ENCODE measurements at regions of chr19 and their contacts with region 1.

Region 1: DNA sequence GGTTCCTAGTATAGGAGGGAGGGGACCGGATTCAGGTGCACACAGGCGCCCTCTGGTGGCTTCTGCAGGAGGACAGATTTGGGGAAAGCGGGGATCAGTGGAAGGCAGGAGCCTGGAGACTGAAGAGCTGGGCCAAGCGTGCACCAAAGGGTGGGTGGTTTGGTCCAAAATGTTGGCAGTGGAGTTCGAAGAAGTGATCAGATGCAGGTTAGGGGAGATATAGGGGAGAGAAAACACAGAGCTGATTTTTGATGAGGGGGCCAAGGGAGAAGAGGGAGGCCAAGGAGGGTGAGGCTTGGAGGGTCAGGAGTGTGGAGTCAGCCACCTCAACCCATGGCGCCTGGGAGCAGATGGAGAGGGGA is 6.8 kb upstream of the CARM1 start:
- DNase-seq: peak; percentile 91
- H3K4me3 ChIP-seq: peak overlapping the region in 1 of 2 experiments; percentile 36; a peak in 1 of 4 replicates
- H3K27ac ChIP-seq: no peak overlapping the region
- H3K4me1 ChIP-seq: no peaks in the 10 kb centered on the region; a peak in 1 of 4 replicates
- H3K27me3 ChIP-seq: no peaks in the 10 kb centered on the region
- CTCF ChIP-seq: peak; percentile 95
- EP300 ChIP-seq: no peak
- RAD21 ChIP-seq: peak; percentile 72

Region 2: GRCh38 chr19:10717356-10718204 is 146.9 kb before region 1 on chr19 and contains the start of gene DNM2:
- CTCF ChIA-PET with region 1: interaction called, 74 read pairs
- POLR2A ChIA-PET with region 1: no interaction called
- DNase-seq: peak; percentile 96
- H3K4me3 ChIP-seq: peak within 1 kb of the TSS; percentile 74 to 98
- H3K27ac ChIP-seq: peak within 1 kb of the TSS; percentile 80 to 93
- H3K4me1 ChIP-seq: peaks cover 4 to 13% of the 10 kb centered on the region in 2 experiments; a peak in 1 of 4 replicates
- H3K27me3 ChIP-seq: no peaks in the 10 kb centered on the region
- CTCF ChIP-seq: peak; percentile 86
- EP300 ChIP-seq: no peak
- RAD21 ChIP-seq: peak; percentile 90
- polyA plus RNA-seq, gene DNM2: 52.5 and 53.6 TPM in 2 replicates

Region 3: GRCh38 chr19:10760273-10760944 is 104.1 kb before region 1 on chr19:
- CTCF ChIA-PET with region 1: interaction called, 74 read pairs
- POLR2A ChIA-PET with region 1: no interaction called
- DNase-seq: no peak
- H3K4me3 ChIP-seq: no peak overlapping the region
- H3K27ac ChIP-seq: no peak overlapping the region
- H3K4me1 ChIP-seq: peaks cover 0 to 20% of the 10 kb centered on the region in 2 experiments; a peak in 1 of 4 replicates
- H3K27me3 ChIP-seq: no peaks in the 10 kb centered on the region
- CTCF ChIP-seq: no peak
- EP300 ChIP-seq: no peak
- RAD21 ChIP-seq: no peak

Region 4: DNA sequence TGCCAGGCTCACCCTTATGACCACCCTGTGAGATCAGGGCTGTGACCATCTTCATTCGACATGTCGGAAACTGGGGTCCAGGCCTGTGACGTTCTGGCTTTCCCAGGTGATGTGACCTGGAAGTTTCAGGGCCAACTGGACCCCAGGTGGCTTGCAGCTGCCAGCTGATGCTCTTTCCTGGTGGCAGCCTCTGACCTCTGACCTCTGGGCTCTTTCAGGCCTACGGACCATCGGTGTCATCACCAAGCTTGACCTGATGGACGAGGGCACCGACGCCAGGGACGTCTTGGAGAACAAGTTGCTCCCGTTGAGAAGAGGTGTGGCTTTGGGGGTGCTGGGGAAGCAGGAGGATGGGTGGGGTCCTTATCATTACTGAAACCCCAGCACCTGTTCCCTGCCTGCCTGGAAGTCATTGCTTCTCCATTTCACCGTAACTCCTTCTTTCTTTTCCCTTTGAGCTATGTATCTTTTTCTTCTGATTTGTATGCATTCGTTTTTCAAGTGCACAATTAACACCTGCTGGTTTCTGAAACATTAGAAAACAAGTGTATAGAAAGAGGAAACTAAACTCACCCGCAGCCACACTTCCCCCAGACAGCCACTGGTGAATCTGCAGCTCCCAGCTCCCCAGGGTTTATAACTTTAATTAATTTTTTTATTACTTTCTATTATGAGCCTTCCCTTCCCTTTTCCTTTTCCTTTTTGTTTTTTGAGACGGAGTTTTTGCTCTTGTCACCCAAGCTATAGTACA is 87.4 kb before region 1 on chr19:
- CTCF ChIA-PET with region 1: interaction called, 17 read pairs
- POLR2A ChIA-PET with region 1: no interaction called
- DNase-seq: no peak
- H3K4me3 ChIP-seq: no peak overlapping the region
- H3K27ac ChIP-seq: no peak overlapping the region
- H3K4me1 ChIP-seq: no peaks in the 10 kb centered on the region
- H3K27me3 ChIP-seq: no peaks in the 10 kb centered on the region
- CTCF ChIP-seq: no peak
- EP300 ChIP-seq: no peak
- RAD21 ChIP-seq: no peak

Region 5: DNA sequence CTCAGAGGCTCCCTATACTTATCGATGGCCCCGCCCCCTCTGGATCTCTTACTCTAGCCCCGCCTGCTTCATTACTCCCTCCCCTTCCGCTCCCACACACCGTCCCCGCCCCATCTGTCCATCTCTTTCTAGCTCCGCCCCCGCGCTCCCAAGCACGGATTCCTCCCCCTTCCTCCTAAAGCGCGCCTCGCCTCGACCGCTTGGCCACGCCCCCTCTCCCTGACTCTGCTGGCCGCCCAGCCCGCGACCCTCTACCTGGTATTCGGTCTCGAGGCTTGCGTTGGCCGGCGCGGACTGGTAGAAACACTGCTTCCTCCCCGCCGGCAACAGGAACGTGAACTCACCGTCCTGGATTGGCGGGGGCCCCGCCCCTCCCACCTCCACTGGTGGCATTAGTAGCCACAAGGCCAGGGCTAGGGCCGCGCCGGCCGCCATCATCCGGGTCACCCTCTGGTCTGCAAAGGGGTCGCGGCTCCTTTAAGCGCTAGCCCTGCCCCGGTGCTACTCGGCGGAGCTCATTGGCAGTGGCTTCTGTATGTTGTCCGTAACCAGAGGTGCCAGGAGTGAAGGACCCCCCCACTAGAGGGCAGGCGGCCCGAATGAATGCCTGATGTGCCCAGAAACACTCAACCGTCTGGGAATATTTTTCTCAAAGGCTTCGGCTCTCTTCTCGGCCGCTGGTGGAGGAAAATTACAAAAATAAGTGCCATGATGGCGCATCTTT is 28.6 kb before region 1 on chr19 and contains the start of gene TMED1:
- CTCF ChIA-PET with region 1: interaction called, 146 read pairs
- POLR2A ChIA-PET with region 1: interaction called, 13 read pairs
- DNase-seq: peak; percentile 99
- H3K4me3 ChIP-seq: peak within 1 kb of the TSS; percentile 73 to 75
- H3K27ac ChIP-seq: peak within 1 kb of the TSS; percentile 97
- H3K4me1 ChIP-seq: peaks cover 0 to 13% of the 10 kb centered on the region in 2 experiments; a peak in 1 of 4 replicates
- H3K27me3 ChIP-seq: no peaks in the 10 kb centered on the region
- CTCF ChIP-seq: peak; percentile 66
- EP300 ChIP-seq: peak in 1 of 2 experiments; percentile 16; a peak in 1 of 4 replicates
- RAD21 ChIP-seq: peak; percentile 71
- polyA plus RNA-seq, gene TMED1: 77.7 and 92.4 TPM in 2 replicates

Region 6: GRCh38 chr19:10884274-10884673 is 19.8 kb after region 1 on chr19:
- CTCF ChIA-PET with region 1: interaction called, 17 read pairs
- POLR2A ChIA-PET with region 1: no interaction called
- DNase-seq: no peak
- H3K4me3 ChIP-seq: no peak overlapping the region
- H3K27ac ChIP-seq: peak overlapping the region in 1 of 2 experiments; percentile 69; a peak in 2 of 4 replicates
- H3K4me1 ChIP-seq: peaks cover 9 to 42% of the 10 kb centered on the region in 2 experiments; a peak in 2 of 4 replicates
- H3K27me3 ChIP-seq: no peaks in the 10 kb centered on the region
- CTCF ChIP-seq: no peak
- EP300 ChIP-seq: peak in 1 of 2 experiments; percentile 42; a peak in 1 of 4 replicates
- RAD21 ChIP-seq: no peak

Measured in SK-N-SH (cell line).